CD4-positive, alpha-beta memory T cell (primary cell): ENCODE measurements at regions of chr1 and their contacts with region 1.

Region 1: GRCh38 chr1:156677616-156678596 is 699 bp upstream of the NES start:
- DNase-seq: peak in 4 of 5 donors; percentile 28 to 37 (median 32)
- H3K4me3 ChIP-seq: no peak overlapping the region
- H3K4me3 Mint-ChIP-seq: peak overlapping the region in 7 of 8 donors; percentile 46 to 74 (median 54)
- H3K27ac ChIP-seq: no peak overlapping the region
- H3K27ac Mint-ChIP-seq: peak overlapping the region in 3 of 7 donors; percentile 21 to 69 (median 60)
- H3K4me1 ChIP-seq: peaks cover 14% of the 10 kb centered on the region
- H3K4me1 Mint-ChIP-seq: peaks cover 1 to 14% (median 12%) of the 10 kb centered on the region in 4 donors
- H3K27me3 ChIP-seq: peaks cover 34% of the 10 kb centered on the region
- H3K27me3 Mint-ChIP-seq: peaks cover 40 to 50% of the 10 kb centered on the region in 2 donors

Region 2: GRCh38 chr1:156659994-156660751 is 17.7 kb before region 1 on chr1:
- CTCF ChIA-PET with region 1: interaction called, 36 read pairs
- POLR2A ChIA-PET with region 1: no interaction called
- intact Hi-C with region 1: loop called (anchors 1 kb)
- DNase-seq: peak; percentile 87 to 90 (median 88)
- H3K4me3 ChIP-seq: peak overlapping the region in 1 of 2 donors; percentile 9
- H3K4me3 Mint-ChIP-seq: peak overlapping the region; percentile 45 to 74 (median 60)
- H3K27ac ChIP-seq: no peak overlapping the region
- H3K27ac Mint-ChIP-seq: peak overlapping the region in 6 of 7 donors; percentile 69 to 90 (median 84)
- H3K4me1 ChIP-seq: peaks cover 64% of the 10 kb centered on the region
- H3K4me1 Mint-ChIP-seq: peaks cover 30 to 69% (median 46%) of the 10 kb centered on the region in 4 donors
- H3K27me3 ChIP-seq: peaks cover 10% of the 10 kb centered on the region
- H3K27me3 Mint-ChIP-seq: peaks cover 18 to 22% of the 10 kb centered on the region in 2 donors